ENCODE measurements at regions of chr1 and their contacts with region 1.

Region 1: DNA sequence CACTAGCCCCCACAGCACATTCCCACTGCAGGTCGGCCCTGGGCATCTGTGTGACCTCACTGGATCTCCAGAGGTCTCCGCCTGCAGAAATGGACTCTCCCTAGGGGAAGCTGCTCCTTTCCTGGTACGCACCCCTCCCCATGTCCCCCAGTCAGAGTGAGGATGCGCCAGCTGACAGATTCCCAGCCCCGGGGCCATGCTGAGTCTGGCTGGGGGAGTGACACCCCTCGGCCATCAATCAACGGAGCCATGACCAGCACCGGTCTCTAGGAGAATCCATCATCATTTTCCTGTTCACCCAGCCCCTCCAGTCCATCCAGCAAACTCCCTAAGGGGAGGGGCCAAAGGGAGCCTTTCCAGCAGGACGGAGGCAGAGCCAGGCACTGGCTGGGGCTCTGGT is 68.7 kb upstream of the PAX7 start:
- DNase-seq: no peak
- H3K4me3 Mint-ChIP-seq: no peak overlapping the region
- H3K27ac Mint-ChIP-seq: no peak overlapping the region
- H3K4me1 Mint-ChIP-seq: peaks cover 11% of the 10 kb centered on the region
- H3K27me3 Mint-ChIP-seq: peaks cover 40% of the 10 kb centered on the region

Region 2: DNA sequence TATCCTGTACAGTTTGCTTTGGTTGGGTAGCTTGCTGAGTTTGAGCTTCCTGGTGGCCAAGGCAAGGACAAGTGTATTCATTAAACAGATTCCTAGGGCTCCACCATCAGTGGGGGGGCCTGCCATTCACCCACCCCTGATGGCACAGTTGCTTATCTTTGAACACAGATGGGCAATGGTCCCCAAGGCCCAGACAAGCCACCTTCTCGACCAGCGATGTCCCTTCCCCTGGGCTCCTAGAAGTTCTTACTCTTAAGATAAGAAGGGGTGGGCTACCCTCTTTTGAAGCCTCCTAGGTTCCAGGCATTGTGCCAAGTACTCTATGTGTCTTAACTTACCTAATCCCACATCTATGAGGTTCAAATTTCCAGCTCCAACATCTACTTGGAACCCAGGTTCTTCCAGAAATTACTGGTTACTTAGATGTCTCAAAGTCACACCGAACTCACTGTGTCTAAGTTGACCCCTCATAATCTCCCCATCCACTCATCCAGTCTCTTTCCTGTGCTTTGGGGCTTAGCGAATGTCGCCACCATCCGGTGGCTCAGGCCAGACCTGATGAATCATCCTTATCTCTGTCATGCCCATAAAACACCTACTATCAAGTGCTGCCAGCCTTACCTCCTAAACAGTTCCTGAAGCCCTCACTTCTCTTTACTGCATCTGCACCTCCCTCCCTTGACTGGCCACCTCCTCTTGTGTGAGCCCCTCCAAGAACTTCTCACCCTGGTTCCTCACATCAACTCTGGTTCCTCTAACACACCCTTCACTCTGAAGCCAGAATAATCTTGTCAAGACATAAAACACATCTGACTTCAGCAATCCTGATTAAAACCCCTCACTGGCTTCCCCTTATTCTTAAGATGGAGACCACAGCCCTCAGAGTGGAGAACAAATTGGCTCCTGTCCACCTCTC is 31.1 kb before region 1 on chr1:
- CTCF ChIA-PET with region 1: no interaction called
- intact Hi-C with region 1: loop called (anchors 2 kb)
- DNase-seq: peak; percentile 10
- H3K4me3 Mint-ChIP-seq: no peak overlapping the region
- H3K27ac Mint-ChIP-seq: no peak overlapping the region
- H3K4me1 Mint-ChIP-seq: no peaks in the 10 kb centered on the region
- H3K27me3 Mint-ChIP-seq: peaks cover 18% of the 10 kb centered on the region

Region 3: GRCh38 chr1:18693256-18694098 is 131.5 kb after region 1 on chr1:
- CTCF ChIA-PET with region 1: no interaction called
- intact Hi-C with region 1: no loop called
- DNase-seq: no peak
- H3K4me3 Mint-ChIP-seq: no peak overlapping the region
- H3K27ac Mint-ChIP-seq: no peak overlapping the region
- H3K4me1 Mint-ChIP-seq: no peaks in the 10 kb centered on the region
- H3K27me3 Mint-ChIP-seq: peaks cover 26% of the 10 kb centered on the region

Region 4: GRCh38 chr1:19096036-19096833 is 534.3 kb after region 1 on chr1:
- CTCF ChIA-PET with region 1: no interaction called
- intact Hi-C with region 1: no loop called
- DNase-seq: peak; percentile 35
- H3K4me3 Mint-ChIP-seq: no peak overlapping the region
- H3K27ac Mint-ChIP-seq: no peak overlapping the region
- H3K4me1 Mint-ChIP-seq: no peaks in the 10 kb centered on the region
- H3K27me3 Mint-ChIP-seq: no peaks in the 10 kb centered on the region

Region 5: DNA sequence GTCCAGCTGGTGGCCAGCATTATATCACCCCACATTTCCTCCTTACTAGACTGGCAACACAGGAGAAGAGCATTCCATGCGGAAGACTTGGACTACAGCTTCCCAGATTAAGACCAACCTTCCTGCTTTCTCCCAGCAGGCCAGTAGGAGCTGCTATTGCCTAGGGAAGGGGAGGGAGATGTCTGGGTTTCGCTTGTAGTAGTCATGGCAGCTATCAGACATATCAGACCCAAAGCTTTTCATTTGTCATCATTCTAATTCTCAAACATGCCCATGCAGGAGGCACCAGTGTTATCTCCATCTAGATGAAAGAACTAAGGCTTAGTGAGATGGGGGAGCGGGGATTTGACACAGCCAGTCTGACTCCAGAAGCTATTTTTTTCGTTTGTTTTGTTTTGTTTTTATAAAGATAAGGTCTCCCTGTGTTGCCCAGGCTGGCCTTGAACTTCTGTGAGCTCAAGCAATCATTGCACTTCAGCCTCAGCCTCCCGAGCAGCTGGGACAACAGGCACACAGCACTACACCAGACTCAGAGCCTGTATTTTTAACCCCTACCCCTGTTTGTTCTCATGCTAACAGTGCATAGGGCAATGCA is 1413.0 kb after region 1 on chr1:
- CTCF ChIA-PET with region 1: no interaction called
- intact Hi-C with region 1: no loop called
- DNase-seq: peak; percentile 48
- H3K4me3 Mint-ChIP-seq: no peak overlapping the region
- H3K27ac Mint-ChIP-seq: no peak overlapping the region
- H3K4me1 Mint-ChIP-seq: no peaks in the 10 kb centered on the region
- H3K27me3 Mint-ChIP-seq: peaks cover 8% of the 10 kb centered on the region

Measured in activated naive CD4-positive, alpha-beta T cell treated with anti-CD3 and anti-CD28 coated beads for 36 hours (primary cell).